ENCODE measurements at regions of chr11 and their contacts with region 1.

Region 1: DNA sequence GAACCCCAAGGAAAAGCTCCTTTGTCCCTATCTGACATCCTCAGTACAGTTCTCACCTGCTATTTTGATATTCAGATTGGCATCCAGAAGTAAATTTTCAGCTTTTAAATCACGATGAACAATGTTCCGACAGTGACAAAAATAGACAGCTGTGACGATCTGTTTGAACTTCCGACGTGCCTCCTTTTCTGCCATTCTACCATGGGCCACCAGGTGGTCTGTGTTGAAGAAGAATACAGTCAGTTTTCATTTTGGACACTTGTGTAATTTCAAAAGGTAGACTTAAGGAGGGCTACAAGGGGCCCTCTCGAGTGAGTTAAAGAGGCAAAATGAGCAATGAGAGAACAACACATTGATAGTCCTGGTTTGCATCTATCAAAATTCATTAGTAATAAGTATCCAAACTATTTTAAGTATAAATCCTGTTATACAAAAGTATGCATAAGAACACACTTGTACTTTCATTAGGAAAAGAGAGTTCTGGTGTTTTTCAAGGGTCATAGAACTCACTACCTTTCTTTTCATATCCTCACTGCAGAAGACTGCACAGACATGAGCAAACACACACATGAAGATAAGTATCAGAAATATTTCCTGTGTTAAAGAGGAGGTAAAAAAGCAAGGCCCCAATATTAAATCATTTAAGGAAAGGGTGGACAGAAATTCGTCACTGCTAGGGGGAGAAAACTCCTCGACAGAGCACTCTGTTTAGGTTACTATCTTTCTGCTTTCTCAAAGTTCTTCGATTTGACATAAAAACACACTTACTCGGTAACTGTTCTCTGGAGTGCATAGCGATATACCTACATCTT is 89.9 kb upstream of the APOA1 start:
- DNase-seq: peak in 7 of 9 donors; percentile 49 to 75 (median 65)
- ATAC-seq: peak; percentile 52
- H3K4me3 ChIP-seq: peak overlapping the region; percentile 18
- H3K4me3 Mint-ChIP-seq: peak overlapping the region; percentile 56 to 85 (median 72)
- H3K27ac ChIP-seq: peak overlapping the region; percentile 81
- H3K27ac Mint-ChIP-seq: peak overlapping the region; percentile 64 to 98 (median 94)
- H3K4me1 ChIP-seq: peaks cover 76 to 80% of the 10 kb centered on the region in 2 donors
- H3K4me1 Mint-ChIP-seq: peaks cover 53 to 90% (median 83%) of the 10 kb centered on the region in 7 donors
- H3K27me3 ChIP-seq: no peaks in the 10 kb centered on the region
- H3K27me3 Mint-ChIP-seq: no peaks in the 10 kb centered on the region

Region 2: GRCh38 chr11:116842117-116842516 is 85.3 kb before region 1 on chr11:
- CTCF ChIA-PET with region 1: no interaction called
- POLR2A ChIA-PET with region 1: no interaction called
- intact Hi-C with region 1: no loop called
- DNase-seq: no peak
- ATAC-seq: no peak
- H3K4me3 ChIP-seq: no peak overlapping the region
- H3K4me3 Mint-ChIP-seq: no peak overlapping the region
- H3K27ac ChIP-seq: no peak overlapping the region
- H3K27ac Mint-ChIP-seq: peak overlapping the region in 2 of 9 donors; percentile 54 to 56
- H3K4me1 ChIP-seq: no peaks in the 10 kb centered on the region
- H3K4me1 Mint-ChIP-seq: peaks cover 0 to 11% (median 0%) of the 10 kb centered on the region in 7 donors
- H3K27me3 ChIP-seq: no peaks in the 10 kb centered on the region
- H3K27me3 Mint-ChIP-seq: no peaks in the 10 kb centered on the region

Region 3: DNA sequence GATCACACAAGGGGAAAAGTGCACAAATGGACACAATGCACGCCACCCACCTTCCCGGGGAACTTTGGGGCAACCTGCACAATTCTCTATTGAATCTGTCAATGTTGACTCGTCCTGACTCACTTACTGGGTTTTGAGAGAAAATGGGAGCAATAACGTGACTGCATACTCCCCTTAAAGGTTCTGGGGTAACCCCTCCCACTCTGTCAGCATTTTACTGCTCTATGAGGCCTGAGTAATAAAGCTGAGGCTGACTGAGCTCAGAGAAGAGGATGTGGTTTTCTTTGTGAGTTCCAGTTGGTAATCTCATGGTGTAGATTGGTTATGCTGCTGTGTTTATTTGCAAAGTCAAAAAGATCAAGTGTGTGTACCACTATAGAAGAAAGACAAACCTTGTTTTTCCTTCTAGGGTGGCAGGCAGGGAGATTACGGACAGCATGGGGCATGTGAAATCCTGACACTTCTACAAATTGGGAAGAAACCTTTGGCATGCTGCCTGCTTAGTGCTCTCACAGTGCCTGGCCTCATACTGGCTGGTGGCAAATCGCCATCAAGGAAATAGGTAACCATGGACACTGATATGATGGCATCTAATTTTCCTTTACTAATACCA is 73.8 kb before region 1 on chr11:
- CTCF ChIA-PET with region 1: interaction called, 4 read pairs
- POLR2A ChIA-PET with region 1: interaction called, 7 read pairs
- intact Hi-C with region 1: loop called (anchors 2 kb)
- DNase-seq: peak in 8 of 9 donors; percentile 53 to 84 (median 77)
- ATAC-seq: peak; percentile 98
- H3K4me3 ChIP-seq: peak overlapping the region; percentile 38
- H3K4me3 Mint-ChIP-seq: peak overlapping the region; percentile 47 to 84 (median 70)
- H3K27ac ChIP-seq: peak overlapping the region; percentile 4
- H3K27ac Mint-ChIP-seq: peak overlapping the region; percentile 41 to 92 (median 81)
- H3K4me1 ChIP-seq: peaks cover 57 to 70% of the 10 kb centered on the region in 2 donors
- H3K4me1 Mint-ChIP-seq: peaks cover 52 to 78% (median 76%) of the 10 kb centered on the region in 7 donors
- H3K27me3 ChIP-seq: no peaks in the 10 kb centered on the region
- H3K27me3 Mint-ChIP-seq: no peaks in the 10 kb centered on the region

Region 4: DNA sequence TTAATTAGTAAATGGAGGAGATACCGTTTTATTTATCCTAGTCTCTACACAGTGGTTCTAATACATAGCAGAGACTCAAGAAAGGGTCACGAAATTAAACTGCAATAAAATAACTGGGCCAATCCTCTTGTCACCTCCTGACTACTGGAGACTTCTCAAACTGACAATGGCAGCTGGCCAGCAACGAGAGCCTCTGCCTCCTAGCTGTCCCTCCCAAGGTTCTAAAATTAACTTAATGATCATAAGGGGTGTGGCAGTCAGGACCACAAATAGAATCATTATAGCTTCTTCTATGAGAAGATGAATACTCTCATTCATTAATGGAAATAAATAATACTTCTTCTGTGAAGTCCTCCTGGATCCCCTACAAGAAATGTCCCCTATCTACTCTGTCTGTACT is 26.2 kb before region 1 on chr11:
- CTCF ChIA-PET with region 1: no interaction called
- POLR2A ChIA-PET with region 1: interaction called, 4 read pairs
- intact Hi-C with region 1: loop called in 1 of 2 experiments (anchors 2 kb)
- DNase-seq: no peak
- ATAC-seq: no peak
- H3K4me3 ChIP-seq: no peak overlapping the region
- H3K4me3 Mint-ChIP-seq: no peak overlapping the region
- H3K27ac ChIP-seq: no peak overlapping the region
- H3K27ac Mint-ChIP-seq: peak overlapping the region in 6 of 9 donors; percentile 23 to 72 (median 40)
- H3K4me1 ChIP-seq: peaks cover 12 to 20% of the 10 kb centered on the region in 2 donors
- H3K4me1 Mint-ChIP-seq: peaks cover 19 to 44% (median 28%) of the 10 kb centered on the region in 7 donors
- H3K27me3 ChIP-seq: no peaks in the 10 kb centered on the region
- H3K27me3 Mint-ChIP-seq: no peaks in the 10 kb centered on the region

Region 5: DNA sequence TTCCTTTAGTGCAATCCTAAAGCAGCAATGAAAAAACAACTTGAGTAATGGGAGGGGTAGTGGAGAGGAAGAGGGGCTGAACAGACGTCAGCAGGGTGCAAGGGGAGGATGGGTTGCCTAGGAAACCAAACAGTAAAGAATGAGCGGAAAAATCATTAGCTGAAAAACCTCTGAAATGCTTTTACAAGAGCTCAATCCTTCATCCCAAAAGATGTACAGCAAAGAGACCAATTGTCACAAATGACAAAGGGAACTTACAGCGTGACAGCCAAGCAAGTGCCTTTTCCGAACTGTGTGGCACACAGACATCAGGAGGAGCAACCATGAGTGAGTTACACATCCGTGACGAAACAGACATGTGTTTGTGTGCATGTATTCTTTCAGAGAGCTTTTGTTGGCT is 66.2 kb after region 1 on chr11:
- CTCF ChIA-PET with region 1: interaction called, 6 read pairs
- POLR2A ChIA-PET with region 1: no interaction called
- intact Hi-C with region 1: loop called (anchors 1 to 5 kb)
- DNase-seq: peak in 7 of 9 donors; percentile 46 to 76 (median 70)
- ATAC-seq: peak; percentile 84
- H3K4me3 ChIP-seq: no peak overlapping the region
- H3K4me3 Mint-ChIP-seq: peak overlapping the region; percentile 23 to 81 (median 64)
- H3K27ac ChIP-seq: peak overlapping the region; percentile 61
- H3K27ac Mint-ChIP-seq: peak overlapping the region; percentile 61 to 98 (median 92)
- H3K4me1 ChIP-seq: peaks cover 5 to 14% of the 10 kb centered on the region in 2 donors
- H3K4me1 Mint-ChIP-seq: peaks cover 33 to 79% (median 64%) of the 10 kb centered on the region in 7 donors
- H3K27me3 ChIP-seq: no peaks in the 10 kb centered on the region
- H3K27me3 Mint-ChIP-seq: no peaks in the 10 kb centered on the region

Region 6: GRCh38 chr11:117098269-117099232 is 171.2 kb after region 1 on chr11 and contains the start of gene SIK3:
- CTCF ChIA-PET with region 1: interaction called, 7 read pairs
- POLR2A ChIA-PET with region 1: interaction called, 40 read pairs
- intact Hi-C with region 1: loop called (anchors 1 kb)
- DNase-seq: peak; percentile 90 to 94 (median 91)
- ATAC-seq: peak; percentile 89
- H3K4me3 ChIP-seq: peak within 1 kb of the TSS; percentile 68
- H3K4me3 Mint-ChIP-seq: peak within 1 kb of the TSS; percentile 91 to 97 (median 95)
- H3K27ac ChIP-seq: peak within 1 kb of the TSS; percentile 99
- H3K27ac Mint-ChIP-seq: peak within 1 kb of the TSS; percentile 95 to 100 (median 98)
- H3K4me1 ChIP-seq: peaks cover 27 to 29% of the 10 kb centered on the region in 2 donors
- H3K4me1 Mint-ChIP-seq: peaks cover 30 to 59% (median 50%) of the 10 kb centered on the region in 7 donors
- H3K27me3 ChIP-seq: no peaks in the 10 kb centered on the region
- H3K27me3 Mint-ChIP-seq: peaks cover 0 to 3% (median 0%) of the 10 kb centered on the region in 5 donors
- total RNA-seq, gene SIK3: 34.4 to 85.2 (median 67.0) TPM

Region 7: DNA sequence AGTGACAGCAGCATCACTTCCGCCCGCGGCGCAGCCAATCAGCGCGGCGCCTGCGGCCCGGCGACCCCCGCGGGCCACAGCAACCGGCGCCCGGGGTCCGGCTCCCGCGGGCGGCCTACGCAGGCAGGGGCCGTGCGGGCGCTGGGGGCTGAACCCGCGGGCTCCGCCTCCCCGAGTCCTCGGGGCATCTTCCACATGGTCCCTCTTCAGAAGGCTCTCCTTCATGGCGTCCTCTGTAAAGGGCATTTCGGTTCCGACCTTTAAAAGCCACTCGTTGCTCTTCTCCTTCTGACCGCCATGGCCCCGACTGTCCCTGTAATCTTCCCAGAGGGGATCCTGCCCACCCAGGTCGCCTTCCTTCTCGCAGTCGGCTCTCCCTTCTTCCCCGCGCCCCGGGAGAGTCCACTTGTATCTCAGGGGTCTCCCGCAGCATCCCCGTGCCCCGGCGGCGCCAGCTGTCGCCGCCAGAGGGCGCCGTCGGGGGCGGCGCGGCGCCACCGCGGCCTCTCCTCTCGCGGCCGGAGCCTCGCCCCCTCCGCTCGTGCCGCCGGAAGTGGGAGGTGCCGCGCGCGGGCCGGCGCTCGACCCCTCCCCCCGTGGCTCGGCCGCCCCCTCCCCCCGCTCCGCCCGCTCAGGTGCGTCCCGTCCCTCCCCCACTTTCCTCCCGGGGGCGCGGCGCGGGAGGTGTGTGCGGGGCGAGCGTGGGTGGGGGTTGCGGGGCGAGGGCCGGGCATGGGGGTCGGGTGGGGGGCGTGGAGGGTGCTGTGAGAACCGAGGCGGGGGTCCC is 304.9 kb after region 1 on chr11 and contains the start of gene RNF214:
- CTCF ChIA-PET with region 1: no interaction called
- POLR2A ChIA-PET with region 1: interaction called, 3 read pairs
- intact Hi-C with region 1: loop called in 1 of 2 experiments (anchors 2 kb)
- DNase-seq: peak; percentile 61 to 84 (median 73)
- ATAC-seq: peak; percentile 92
- H3K4me3 ChIP-seq: peak within 1 kb of the TSS; percentile 96
- H3K4me3 Mint-ChIP-seq: peak within 1 kb of the TSS; percentile 91 to 100 (median 98)
- H3K27ac ChIP-seq: peak within 1 kb of the TSS; percentile 97
- H3K27ac Mint-ChIP-seq: peak within 1 kb of the TSS; percentile 94 to 100 (median 99)
- H3K4me1 ChIP-seq: peaks cover 32 to 35% of the 10 kb centered on the region in 2 donors
- H3K4me1 Mint-ChIP-seq: peaks cover 40 to 55% (median 50%) of the 10 kb centered on the region in 7 donors
- H3K27me3 ChIP-seq: no peaks in the 10 kb centered on the region
- H3K27me3 Mint-ChIP-seq: no peaks in the 10 kb centered on the region
- total RNA-seq, gene RNF214: 16.6 to 36.0 (median 24.0) TPM